SK-MEL-5 (cell line): ENCODE measurements at regions of chr14 and their contacts with region 1.

Region 1: GRCh38 chr14:36941783-36942521 is 230.5 kb downstream of the SLC25A21 start:
- DNase-seq: peak; percentile 72

Region 2: GRCh38 chr14:36619131-36619530 is 322.8 kb before region 1 on chr14:
- in situ Hi-C with region 1: no loop called
- DNase-seq: peak; percentile 81

Region 3: GRCh38 chr14:36647824-36648753 is 293.9 kb before region 1 on chr14:
- in situ Hi-C with region 1: loop called (anchors 25 kb)
- DNase-seq: peak; percentile 64

Region 4: DNA sequence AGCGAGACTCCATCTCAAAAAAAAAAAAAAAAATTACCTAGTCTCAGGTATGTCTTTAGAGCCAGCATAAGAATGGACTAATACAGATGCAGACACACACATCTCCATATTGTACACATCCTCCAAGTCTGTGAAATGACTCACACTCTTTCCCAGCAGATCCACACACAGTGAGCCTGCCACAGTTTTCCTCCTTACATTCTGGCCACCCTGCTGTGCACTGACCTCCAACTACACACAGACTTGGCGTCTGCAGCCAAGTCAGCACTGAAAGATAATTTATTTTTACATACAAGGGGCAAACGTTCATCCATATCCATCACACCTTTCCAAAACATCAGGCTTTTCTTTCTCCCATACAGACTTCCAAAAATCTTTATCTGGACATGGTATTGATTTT is 114.5 kb after region 1 on chr14:
- in situ Hi-C with region 1: no loop called
- DNase-seq: no peak